Activated T-helper 1 cell treated with anti-CD3 and anti-CD28 coated beads, Interleukin-12 subunit alpha, Interleukin-12 subunit beta, Interleukin-2, Interleukin-4 antibody, amounts not matched to agents 30 ng/mL and 10 ng/mL and 1 ng/mL, durations not matched to agents 14 hours and 24 hours and 36 hours (primary cell): ENCODE measurements at regions of chr15 and their contacts with region 1.

Region 1: GRCh38 chr15:42273102-42273899 is at the starts of genes GANC and TMEM87A:
- DNase-seq: peak; percentile 95
- H3K4me3 Mint-ChIP-seq: peak within 1 kb of the TSS; percentile 99
- H3K27ac Mint-ChIP-seq: peak within 1 kb of the TSS; percentile 98
- H3K4me1 Mint-ChIP-seq: peaks cover 47% of the 10 kb centered on the region
- H3K27me3 Mint-ChIP-seq: no peaks in the 10 kb centered on the region
- total RNA-seq, gene GANC: 13.0 and 15.2 TPM in 2 replicates
- total RNA-seq, gene TMEM87A: 42.3 and 46.2 TPM in 2 replicates

Region 2: GRCh38 chr15:41894791-41895463 is 378.4 kb before region 1 on chr15:
- intact Hi-C with region 1: no loop called
- DNase-seq: peak; percentile 77
- H3K4me3 Mint-ChIP-seq: peak overlapping the region; percentile 6
- H3K27ac Mint-ChIP-seq: peak overlapping the region; percentile 82
- H3K4me1 Mint-ChIP-seq: peaks cover 23% of the 10 kb centered on the region
- H3K27me3 Mint-ChIP-seq: no peaks in the 10 kb centered on the region

Region 3: DNA sequence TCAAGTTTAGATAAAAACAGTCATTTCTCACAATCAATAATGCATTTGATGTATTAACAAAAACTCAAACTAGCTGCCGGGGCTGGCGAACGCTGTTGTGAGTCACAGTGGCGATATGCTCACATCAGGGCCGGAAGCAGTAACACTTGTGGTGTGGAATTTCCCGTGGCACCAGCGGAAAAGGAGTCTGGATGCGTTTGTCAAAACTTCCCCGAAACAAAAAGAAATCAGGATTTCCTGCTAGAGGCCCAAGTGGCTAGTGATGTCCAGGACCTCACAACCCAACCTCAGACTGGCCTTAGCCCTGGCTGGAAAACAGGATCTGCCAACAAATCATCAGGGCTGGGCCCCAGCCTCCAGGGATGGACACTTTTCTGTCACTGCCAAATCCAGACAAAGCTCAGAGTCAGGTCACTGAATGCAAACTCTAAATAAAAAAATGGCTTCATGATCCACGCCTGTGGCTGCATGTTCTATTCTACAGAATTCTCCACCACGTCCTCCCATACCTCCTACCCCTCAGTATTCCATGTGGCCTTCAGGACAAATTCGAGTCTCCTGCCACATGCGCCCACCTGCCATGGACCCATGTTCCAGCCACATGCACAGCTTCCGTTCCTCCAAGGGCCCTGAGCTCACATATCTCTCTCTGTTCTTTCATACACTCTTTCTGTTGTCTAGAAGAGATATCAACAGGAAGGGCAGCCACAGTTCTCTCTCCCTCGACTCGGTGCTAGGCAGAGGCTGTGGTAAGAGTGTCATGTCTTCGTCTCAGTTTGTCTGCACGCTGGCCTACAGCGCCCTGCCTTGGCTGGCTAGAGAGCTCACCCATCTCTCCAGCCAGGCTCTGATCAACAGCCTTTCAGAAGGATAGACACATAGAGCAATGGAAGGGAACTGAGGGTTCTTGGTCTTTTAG is 336.4 kb before region 1 on chr15:
- intact Hi-C with region 1: loop called (anchors 1 kb)
- DNase-seq: peak; percentile 78
- H3K4me3 Mint-ChIP-seq: peak overlapping the region; percentile 73
- H3K27ac Mint-ChIP-seq: peak overlapping the region; percentile 100
- H3K4me1 Mint-ChIP-seq: peaks cover 78% of the 10 kb centered on the region
- H3K27me3 Mint-ChIP-seq: no peaks in the 10 kb centered on the region

Region 4: DNA sequence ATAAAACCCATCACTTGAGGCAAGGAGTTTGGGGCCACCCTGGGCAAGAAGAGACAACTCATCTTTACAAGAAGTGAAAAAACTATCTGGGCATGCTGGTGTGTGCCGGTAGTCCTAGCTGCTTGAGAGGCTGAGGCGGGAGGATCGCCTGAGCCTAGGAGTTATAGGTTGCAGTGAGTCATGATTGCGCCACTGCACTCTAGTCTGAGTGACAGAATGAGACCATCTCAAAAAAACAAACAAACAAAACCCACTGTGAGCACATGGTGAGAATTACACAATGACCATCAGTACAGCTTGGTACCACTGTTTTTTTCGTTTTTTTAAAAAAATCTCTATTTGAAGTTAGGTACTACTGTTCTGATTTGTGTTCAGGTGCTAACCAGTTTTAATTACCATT is 78.8 kb before region 1 on chr15:
- intact Hi-C with region 1: loop called (anchors 2 kb)
- DNase-seq: no peak
- H3K4me3 Mint-ChIP-seq: no peak overlapping the region
- H3K27ac Mint-ChIP-seq: peak overlapping the region; percentile 48
- H3K4me1 Mint-ChIP-seq: peaks cover 32% of the 10 kb centered on the region
- H3K27me3 Mint-ChIP-seq: no peaks in the 10 kb centered on the region

Region 5: DNA sequence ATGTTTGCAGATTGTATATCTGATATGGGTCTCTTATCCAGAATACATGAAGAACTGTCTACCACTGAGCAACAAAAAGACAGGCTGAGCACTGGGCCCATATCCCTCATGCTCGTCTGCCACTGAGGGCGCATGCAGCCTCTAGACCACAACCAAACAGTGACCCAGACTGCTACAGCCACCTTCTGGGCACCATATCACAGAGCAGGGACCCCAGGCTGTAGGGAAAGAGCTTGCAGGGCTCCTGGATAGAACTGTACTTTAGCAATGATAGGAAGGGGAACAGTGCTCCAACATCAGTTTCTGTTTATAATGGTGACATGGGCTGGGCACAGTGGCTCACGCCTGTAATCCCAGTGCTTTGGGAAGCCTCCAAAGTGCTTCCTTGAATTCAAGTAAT is 40.2 kb after region 1 on chr15:
- intact Hi-C with region 1: no loop called
- DNase-seq: no peak
- H3K4me3 Mint-ChIP-seq: no peak overlapping the region
- H3K27ac Mint-ChIP-seq: no peak overlapping the region
- H3K4me1 Mint-ChIP-seq: no peaks in the 10 kb centered on the region
- H3K27me3 Mint-ChIP-seq: no peaks in the 10 kb centered on the region

Region 6: DNA sequence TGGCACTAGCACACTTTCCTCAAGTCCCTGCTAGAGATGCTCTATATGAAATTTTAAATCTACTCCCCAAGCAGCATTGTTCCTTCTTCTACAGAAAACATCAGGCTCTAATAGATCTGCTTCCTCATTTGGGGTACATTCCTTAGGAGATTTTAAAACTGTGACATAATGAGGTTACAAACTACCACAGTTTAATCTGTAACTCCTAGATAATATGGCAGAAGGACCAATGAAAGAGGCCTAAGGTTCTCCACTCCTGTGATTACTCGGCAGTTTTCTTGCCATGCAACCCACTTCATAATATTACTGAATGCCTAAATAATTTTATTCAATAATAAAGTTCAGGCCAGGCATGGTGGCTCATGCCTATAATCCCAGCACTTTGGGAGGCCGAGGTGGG is 201.5 kb after region 1 on chr15:
- intact Hi-C with region 1: loop called (anchors 5 kb)
- DNase-seq: no peak
- H3K4me3 Mint-ChIP-seq: no peak overlapping the region
- H3K27ac Mint-ChIP-seq: no peak overlapping the region
- H3K4me1 Mint-ChIP-seq: peaks cover 5% of the 10 kb centered on the region
- H3K27me3 Mint-ChIP-seq: no peaks in the 10 kb centered on the region

Region 7: DNA sequence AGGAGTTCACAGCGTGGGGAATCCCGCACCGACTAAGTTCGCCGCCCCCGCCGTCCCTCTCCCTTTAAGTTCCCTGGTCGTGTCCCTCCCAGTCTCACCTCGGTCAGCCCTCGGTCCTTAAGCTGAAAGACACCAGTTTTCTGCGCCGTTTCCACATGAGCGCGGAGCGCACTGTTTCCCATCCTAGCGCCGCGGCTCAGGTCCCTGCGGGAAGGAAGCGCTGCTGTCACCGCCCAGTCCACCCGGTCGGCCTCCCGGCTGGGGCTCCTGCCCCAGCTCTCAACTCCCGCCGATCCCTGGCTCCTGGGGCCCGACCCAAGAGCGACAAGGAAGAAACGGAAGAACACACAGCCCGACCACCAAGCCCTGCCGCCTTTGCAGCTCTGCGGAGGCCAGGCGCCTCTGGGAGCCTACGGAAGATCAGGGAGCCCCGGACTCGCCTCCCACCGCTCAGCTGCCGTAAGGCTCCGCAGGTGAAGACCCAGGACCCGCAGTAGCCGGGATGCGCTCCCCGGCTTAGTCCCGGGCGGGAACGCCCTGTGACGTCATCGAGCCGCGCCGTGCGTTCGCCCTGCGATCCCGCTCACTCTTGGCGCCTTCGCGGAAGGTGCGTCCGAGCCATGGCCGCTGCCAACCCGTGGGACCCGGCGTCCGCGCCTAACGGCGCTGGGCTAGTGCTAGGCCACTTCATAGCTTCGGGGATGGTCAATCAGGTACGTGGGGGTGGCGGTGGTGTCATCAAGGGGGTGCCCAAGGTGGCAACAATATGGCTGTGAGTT is 275.1 kb after region 1 on chr15 and contains the starts of genes HAUS2 and LRRC57:
- intact Hi-C with region 1: loop called (anchors 1 kb)
- DNase-seq: peak; percentile 86
- H3K4me3 Mint-ChIP-seq: peak within 1 kb of the TSS; percentile 96
- H3K27ac Mint-ChIP-seq: peak within 1 kb of the TSS; percentile 94
- H3K4me1 Mint-ChIP-seq: peaks cover 50% of the 10 kb centered on the region
- H3K27me3 Mint-ChIP-seq: no peaks in the 10 kb centered on the region
- total RNA-seq, gene HAUS2: 43.2 and 46.7 TPM in 2 replicates
- total RNA-seq, gene LRRC57: 19.9 TPM in 2 replicates

Region 8: GRCh38 chr15:42650208-42651066 is 377.1 kb after region 1 on chr15:
- intact Hi-C with region 1: loop called (anchors 2 kb)
- DNase-seq: peak; percentile 61
- H3K4me3 Mint-ChIP-seq: no peak overlapping the region
- H3K27ac Mint-ChIP-seq: no peak overlapping the region
- H3K4me1 Mint-ChIP-seq: peaks cover 20% of the 10 kb centered on the region
- H3K27me3 Mint-ChIP-seq: peaks cover under 1% of the 10 kb centered on the region

Region 9: GRCh38 chr15:43105778-43106485 is 832.6 kb after region 1 on chr15 and contains the start of gene UBR1:
- intact Hi-C with region 1: loop called (anchors 1 kb)
- DNase-seq: peak; percentile 87
- H3K4me3 Mint-ChIP-seq: peak within 1 kb of the TSS; percentile 90
- H3K27ac Mint-ChIP-seq: peak within 1 kb of the TSS; percentile 92
- H3K4me1 Mint-ChIP-seq: peaks cover 45% of the 10 kb centered on the region
- H3K27me3 Mint-ChIP-seq: no peaks in the 10 kb centered on the region
- total RNA-seq, gene UBR1: 29.1 and 35.3 TPM in 2 replicates